ENCODE measurements at regions of chr22 and their contacts with region 1.

Region 1: DNA sequence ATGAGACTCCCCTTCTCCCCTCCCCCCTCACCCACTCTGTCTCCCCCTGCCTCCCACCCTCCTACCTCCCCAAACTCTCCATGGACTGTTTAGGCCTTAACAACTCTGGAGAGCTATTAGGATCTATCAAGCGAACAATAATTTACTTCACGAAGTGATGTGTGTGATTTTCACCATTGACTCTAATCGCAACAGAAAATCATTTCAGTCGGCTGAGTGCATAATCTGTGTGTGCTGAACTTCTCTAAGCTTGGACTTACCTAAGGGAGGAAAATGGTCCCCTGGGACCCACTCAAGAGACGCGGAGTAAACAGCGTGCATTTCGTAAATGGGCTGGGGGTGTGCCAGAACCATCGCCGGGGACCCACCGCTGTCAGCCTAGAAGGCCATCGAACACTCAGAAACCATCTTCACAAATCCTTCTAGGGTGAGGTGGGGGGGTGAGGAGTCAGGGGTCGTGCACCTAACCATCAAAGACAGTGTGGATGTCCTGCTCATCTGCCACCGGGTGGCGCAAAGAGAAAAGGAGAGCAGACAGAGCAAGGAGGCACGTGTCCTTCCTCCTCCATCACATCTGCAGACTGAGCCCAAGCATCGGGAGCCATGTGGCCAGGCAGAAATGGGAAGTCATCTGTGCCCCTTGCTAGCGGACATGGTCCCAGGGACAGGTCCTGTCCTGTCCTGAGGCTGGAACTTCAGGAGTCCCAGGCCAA is 62.1 kb upstream of the NUP50 start:
- DNase-seq: peak; percentile 45
- H3K4me3 Mint-ChIP-seq: no peak overlapping the region
- H3K27ac Mint-ChIP-seq: no peak overlapping the region
- H3K4me1 Mint-ChIP-seq: peaks cover 16% of the 10 kb centered on the region
- H3K27me3 Mint-ChIP-seq: peaks cover 55% of the 10 kb centered on the region
- CTCF ChIP-seq: no peak

Region 2: GRCh38 chr22:45058622-45058912 is 43.1 kb before region 1 on chr22:
- CTCF ChIA-PET with region 1: interaction called, 11 read pairs
- intact Hi-C with region 1: no loop called
- DNase-seq: no peak
- H3K4me3 Mint-ChIP-seq: no peak overlapping the region
- H3K27ac Mint-ChIP-seq: no peak overlapping the region
- H3K4me1 Mint-ChIP-seq: no peaks in the 10 kb centered on the region
- H3K27me3 Mint-ChIP-seq: peaks cover 78% of the 10 kb centered on the region
- CTCF ChIP-seq: no peak

Region 3: GRCh38 chr22:45159652-45160462 is 58.2 kb after region 1 on chr22:
- CTCF ChIA-PET with region 1: interaction called, 3 read pairs
- intact Hi-C with region 1: loop called (anchors 10 kb)
- DNase-seq: peak; percentile 48
- H3K4me3 Mint-ChIP-seq: peak overlapping the region; percentile 94
- H3K27ac Mint-ChIP-seq: peak overlapping the region; percentile 93
- H3K4me1 Mint-ChIP-seq: peaks cover 72% of the 10 kb centered on the region
- H3K27me3 Mint-ChIP-seq: no peaks in the 10 kb centered on the region
- CTCF ChIP-seq: no peak

Region 4: GRCh38 chr22:45290410-45290936 is 188.8 kb after region 1 on chr22:
- CTCF ChIA-PET with region 1: no interaction called
- intact Hi-C with region 1: no loop called
- DNase-seq: peak; percentile 26
- H3K4me3 Mint-ChIP-seq: no peak overlapping the region
- H3K27ac Mint-ChIP-seq: no peak overlapping the region
- H3K4me1 Mint-ChIP-seq: no peaks in the 10 kb centered on the region
- H3K27me3 Mint-ChIP-seq: peaks cover 27% of the 10 kb centered on the region
- CTCF ChIP-seq: no peak

Region 5: GRCh38 chr22:45435544-45436139 is 334.0 kb after region 1 on chr22:
- CTCF ChIA-PET with region 1: no interaction called
- intact Hi-C with region 1: no loop called
- DNase-seq: peak; percentile 87
- H3K4me3 Mint-ChIP-seq: no peak overlapping the region
- H3K27ac Mint-ChIP-seq: no peak overlapping the region
- H3K4me1 Mint-ChIP-seq: peaks cover 13% of the 10 kb centered on the region
- H3K27me3 Mint-ChIP-seq: no peaks in the 10 kb centered on the region
- CTCF ChIP-seq: peak; percentile 93